Activated T-helper 1 cell treated with anti-CD3 and anti-CD28 coated beads, Interleukin-12 subunit alpha, Interleukin-12 subunit beta, Interleukin-2, Interleukin-4 antibody, amounts not matched to agents 30 ng/mL and 10 ng/mL and 1 ng/mL, durations not matched to agents 14 hours and 24 hours and 36 hours (primary cell): ENCODE measurements at regions of chr2 and their contacts with region 1.

Region 1: DNA sequence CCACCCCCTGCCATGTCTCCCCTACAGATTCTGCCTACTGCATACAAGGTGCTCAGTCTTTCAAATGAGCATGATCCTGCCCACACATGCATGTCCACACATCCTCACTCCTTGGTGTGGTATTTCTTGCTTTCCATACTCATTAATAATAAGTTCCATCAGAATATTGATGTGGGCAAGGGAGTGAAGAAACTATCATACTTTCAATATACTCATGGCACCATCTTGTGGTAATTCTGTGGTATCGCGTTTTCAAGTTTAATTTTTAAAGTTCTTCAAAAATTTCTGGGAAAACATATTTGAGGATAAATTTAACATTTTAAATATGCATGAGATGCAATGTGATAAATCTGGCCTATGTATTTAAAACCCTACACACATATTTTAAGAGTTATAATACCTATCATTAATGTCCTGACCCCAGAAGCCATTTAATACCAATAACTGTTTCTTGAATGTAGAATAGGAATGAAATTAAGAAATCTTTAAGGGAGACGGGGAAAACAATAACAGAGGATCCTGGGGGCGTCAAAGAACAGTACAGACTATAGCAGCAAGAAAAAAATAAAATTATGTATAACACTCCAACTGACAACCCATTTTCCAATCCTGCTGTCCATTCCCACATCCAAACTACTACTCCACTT is 110.1 kb downstream of the ZNF385B start:
- DNase-seq: no peak
- H3K4me3 Mint-ChIP-seq: no peak overlapping the region
- H3K27ac Mint-ChIP-seq: no peak overlapping the region
- H3K4me1 Mint-ChIP-seq: no peaks in the 10 kb centered on the region
- H3K27me3 Mint-ChIP-seq: peaks cover 10% of the 10 kb centered on the region

Region 2: GRCh38 chr2:179218848-179219594 is 532.3 kb before region 1 on chr2:
- intact Hi-C with region 1: loop called (anchors 1 kb)
- DNase-seq: peak; percentile 21
- H3K4me3 Mint-ChIP-seq: no peak overlapping the region
- H3K27ac Mint-ChIP-seq: no peak overlapping the region
- H3K4me1 Mint-ChIP-seq: no peaks in the 10 kb centered on the region
- H3K27me3 Mint-ChIP-seq: no peaks in the 10 kb centered on the region

Region 3: DNA sequence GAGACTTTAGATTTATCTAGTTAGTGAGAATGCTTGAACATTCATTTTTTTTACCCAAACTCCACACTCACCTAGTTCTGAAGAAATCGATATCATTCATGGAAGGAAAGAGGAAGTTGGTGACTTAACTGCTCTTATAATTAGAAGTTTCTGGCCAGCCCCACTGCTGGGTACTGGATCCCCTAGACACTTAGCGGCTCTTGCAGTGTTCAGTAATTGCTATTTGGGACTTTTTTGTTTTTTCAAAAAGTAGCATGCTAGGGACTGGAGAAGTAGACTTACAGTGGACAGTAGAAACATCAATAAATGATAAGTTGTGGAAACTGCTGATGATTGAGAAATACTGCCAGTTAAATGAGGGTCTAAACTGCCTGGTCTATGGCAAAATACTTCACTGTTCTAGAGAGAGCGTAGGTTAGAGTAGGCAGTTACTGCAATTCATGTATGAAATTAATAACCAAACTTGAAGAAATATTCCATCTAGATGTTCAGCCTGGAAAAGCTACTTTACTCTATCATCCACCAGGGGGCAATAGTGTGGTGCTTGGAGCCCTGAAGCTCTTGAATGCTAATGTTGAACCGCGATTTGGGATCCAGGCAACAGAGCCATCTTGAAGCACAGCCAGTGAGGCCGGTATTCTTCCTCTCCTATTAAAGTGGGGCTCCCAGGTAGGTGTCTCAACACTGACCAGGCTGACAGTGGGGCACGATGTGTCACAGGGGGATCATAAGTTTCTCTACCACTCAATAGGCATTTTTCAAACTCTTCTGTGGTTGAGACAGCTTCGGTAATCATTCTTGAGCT is 340.5 kb before region 1 on chr2:
- intact Hi-C with region 1: loop called (anchors 1 kb)
- DNase-seq: no peak
- H3K4me3 Mint-ChIP-seq: no peak overlapping the region
- H3K27ac Mint-ChIP-seq: no peak overlapping the region
- H3K4me1 Mint-ChIP-seq: peaks cover 9% of the 10 kb centered on the region
- H3K27me3 Mint-ChIP-seq: peaks cover 17% of the 10 kb centered on the region

Region 4: DNA sequence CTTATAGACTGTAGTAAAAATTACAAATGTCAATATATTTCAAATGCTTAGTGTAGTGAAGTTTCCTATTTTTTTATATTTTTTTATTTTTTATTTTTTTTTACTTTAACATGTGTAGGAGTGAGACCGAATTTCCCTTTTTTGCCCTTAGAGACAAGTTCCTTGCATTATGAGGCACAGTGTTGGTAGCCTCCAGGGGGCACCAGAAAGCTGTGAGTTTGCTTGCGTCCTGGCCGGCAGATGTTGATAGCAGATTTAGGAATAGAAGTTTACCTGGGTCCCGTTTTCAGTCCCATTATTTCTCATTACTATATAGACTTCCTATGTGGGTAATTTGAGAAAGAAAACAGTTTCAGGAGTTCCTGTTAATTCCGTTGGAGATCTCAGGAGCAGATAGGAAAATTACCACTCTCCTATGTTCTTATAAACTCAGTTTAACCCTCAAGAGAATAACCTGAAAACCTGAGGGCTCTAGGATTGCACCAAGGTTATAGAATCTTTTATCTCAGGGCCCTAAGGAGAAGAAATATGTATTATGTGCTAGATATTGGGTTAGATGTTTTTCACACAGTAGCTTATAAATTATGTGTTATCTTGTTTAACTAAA is 329.1 kb before region 1 on chr2:
- intact Hi-C with region 1: loop called (anchors 1 kb)
- DNase-seq: peak; percentile 11
- H3K4me3 Mint-ChIP-seq: no peak overlapping the region
- H3K27ac Mint-ChIP-seq: no peak overlapping the region
- H3K4me1 Mint-ChIP-seq: no peaks in the 10 kb centered on the region
- H3K27me3 Mint-ChIP-seq: peaks cover 18% of the 10 kb centered on the region